H1 (cell line): ENCODE measurements at regions of chr5 and their contacts with region 1.

Region 1: GRCh38 chr5:157761690-157762621 is 18.4 kb downstream of the LSM11 start:
- DNase-seq: no peak
- H3K4me3 ChIP-seq: no peak overlapping the region
- H3K27ac ChIP-seq: no peak overlapping the region
- H3K4me1 ChIP-seq: no peaks in the 10 kb centered on the region
- H3K27me3 ChIP-seq: no peaks in the 10 kb centered on the region
- CTCF ChIP-seq: peak in 2 of 3 experiments; percentile 67 to 76; a peak in 3 of 4 replicates
- EP300 ChIP-seq: no peak
- POLR2A ChIP-seq: no peak
- RAD21 ChIP-seq: peak; percentile 84 to 88

Region 2: GRCh38 chr5:157384971-157385709 is 376.8 kb before region 1 on chr5:
- CTCF ChIA-PET with region 1: no interaction called
- POLR2A ChIA-PET with region 1: no interaction called
- DNase-seq: peak in 1 of 2 experiments; percentile 51
- H3K4me3 ChIP-seq: no peak overlapping the region
- H3K27ac ChIP-seq: no peak overlapping the region
- H3K4me1 ChIP-seq: peaks cover 0 to 8% (median 0%) of the 10 kb centered on the region in 4 experiments; a peak in 2 of 7 replicates
- H3K27me3 ChIP-seq: no peaks in the 10 kb centered on the region
- CTCF ChIP-seq: no peak
- EP300 ChIP-seq: no peak
- POLR2A ChIP-seq: no peak
- RAD21 ChIP-seq: no peak

Region 3: DNA sequence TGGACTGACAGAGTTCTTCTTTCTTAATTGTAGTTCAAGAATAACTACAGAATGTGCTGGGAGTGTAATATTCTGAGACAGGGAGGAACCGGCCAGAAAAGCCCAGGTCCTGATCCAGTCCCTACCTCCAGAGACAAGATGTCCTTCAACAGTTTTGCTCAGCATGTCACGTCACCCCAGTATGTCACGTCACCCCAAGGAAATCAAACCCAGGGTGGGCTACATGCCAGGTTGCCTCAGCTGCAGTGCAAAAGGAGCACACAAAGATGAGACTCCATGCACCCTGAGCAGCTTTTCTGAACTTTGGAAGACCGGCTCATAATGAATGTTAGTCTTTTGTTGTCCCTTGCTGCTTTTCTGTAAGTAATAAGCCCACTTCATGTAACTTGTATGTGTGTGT is 327.9 kb before region 1 on chr5:
- CTCF ChIA-PET with region 1: no interaction called
- POLR2A ChIA-PET with region 1: no interaction called
- DNase-seq: no peak
- H3K4me3 ChIP-seq: no peak overlapping the region
- H3K27ac ChIP-seq: no peak overlapping the region
- H3K4me1 ChIP-seq: no peaks in the 10 kb centered on the region
- H3K27me3 ChIP-seq: no peaks in the 10 kb centered on the region
- CTCF ChIP-seq: no peak
- EP300 ChIP-seq: no peak
- POLR2A ChIP-seq: no peak
- RAD21 ChIP-seq: no peak

Region 4: GRCh38 chr5:157710872-157711271 is 51.1 kb before region 1 on chr5:
- CTCF ChIA-PET with region 1: no interaction called
- POLR2A ChIA-PET with region 1: no interaction called
- DNase-seq: no peak
- H3K4me3 ChIP-seq: no peak overlapping the region
- H3K27ac ChIP-seq: no peak overlapping the region
- H3K4me1 ChIP-seq: no peaks in the 10 kb centered on the region
- H3K27me3 ChIP-seq: no peaks in the 10 kb centered on the region
- CTCF ChIP-seq: no peak
- EP300 ChIP-seq: no peak
- POLR2A ChIP-seq: no peak
- RAD21 ChIP-seq: no peak

Region 5: GRCh38 chr5:157772127-157772526 is 10.2 kb after region 1 on chr5:
- CTCF ChIA-PET with region 1: interaction called, 27 read pairs
- POLR2A ChIA-PET with region 1: no interaction called
- DNase-seq: no peak
- H3K4me3 ChIP-seq: no peak overlapping the region
- H3K27ac ChIP-seq: no peak overlapping the region
- H3K4me1 ChIP-seq: no peaks in the 10 kb centered on the region
- H3K27me3 ChIP-seq: no peaks in the 10 kb centered on the region
- CTCF ChIP-seq: no peak
- EP300 ChIP-seq: no peak
- POLR2A ChIP-seq: no peak
- RAD21 ChIP-seq: no peak

Region 6: GRCh38 chr5:157778121-157778805 is 16.3 kb after region 1 on chr5:
- CTCF ChIA-PET with region 1: interaction called, 27 read pairs
- POLR2A ChIA-PET with region 1: no interaction called
- DNase-seq: no peak
- H3K4me3 ChIP-seq: no peak overlapping the region
- H3K27ac ChIP-seq: no peak overlapping the region
- H3K4me1 ChIP-seq: no peaks in the 10 kb centered on the region
- H3K27me3 ChIP-seq: no peaks in the 10 kb centered on the region
- CTCF ChIP-seq: no peak
- EP300 ChIP-seq: no peak
- POLR2A ChIP-seq: no peak
- RAD21 ChIP-seq: no peak

Region 7: GRCh38 chr5:158320178-158320674 is 558.3 kb after region 1 on chr5:
- CTCF ChIA-PET with region 1: no interaction called
- POLR2A ChIA-PET with region 1: no interaction called
- DNase-seq: no peak
- H3K4me3 ChIP-seq: no peak overlapping the region
- H3K27ac ChIP-seq: no peak overlapping the region
- H3K4me1 ChIP-seq: peaks cover 0 to 5% (median under 1%) of the 10 kb centered on the region in 4 experiments; a peak in 2 of 7 replicates
- H3K27me3 ChIP-seq: no peaks in the 10 kb centered on the region
- CTCF ChIP-seq: no peak
- EP300 ChIP-seq: no peak
- POLR2A ChIP-seq: no peak
- RAD21 ChIP-seq: no peak